Activated CD8-positive, alpha-beta T cell treated with anti-CD3 and anti-CD28 coated beads for 36 hours (primary cell): ENCODE measurements at regions of chr18 and their contacts with region 1.

Region 1: DNA sequence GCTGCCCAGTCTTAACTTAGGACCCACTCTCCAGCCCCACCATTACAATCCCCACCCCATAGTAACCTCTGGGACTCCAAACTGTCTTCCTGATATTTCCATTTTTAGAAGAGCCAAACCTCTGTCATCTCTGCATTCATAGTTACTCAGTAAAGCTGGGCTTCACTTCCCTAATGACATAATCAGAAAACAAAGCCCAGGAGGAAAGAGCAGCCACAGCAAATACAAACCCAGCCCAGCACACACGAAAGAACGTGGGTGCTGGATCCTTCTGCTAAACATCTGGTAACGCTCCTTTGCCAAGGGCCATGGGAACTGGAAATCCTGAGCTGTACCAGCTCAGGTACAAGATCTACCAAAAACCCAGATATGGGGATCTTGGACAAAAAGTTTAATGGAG is 36.8 kb upstream of the RIOK3 start:
- DNase-seq: no peak
- ATAC-seq: no peak
- H3K4me3 Mint-ChIP-seq: no peak overlapping the region
- H3K27ac Mint-ChIP-seq: no peak overlapping the region
- H3K4me1 Mint-ChIP-seq: no peaks in the 10 kb centered on the region
- H3K27me3 Mint-ChIP-seq: no peaks in the 10 kb centered on the region
- CTCF ChIP-seq: no peak

Region 2: DNA sequence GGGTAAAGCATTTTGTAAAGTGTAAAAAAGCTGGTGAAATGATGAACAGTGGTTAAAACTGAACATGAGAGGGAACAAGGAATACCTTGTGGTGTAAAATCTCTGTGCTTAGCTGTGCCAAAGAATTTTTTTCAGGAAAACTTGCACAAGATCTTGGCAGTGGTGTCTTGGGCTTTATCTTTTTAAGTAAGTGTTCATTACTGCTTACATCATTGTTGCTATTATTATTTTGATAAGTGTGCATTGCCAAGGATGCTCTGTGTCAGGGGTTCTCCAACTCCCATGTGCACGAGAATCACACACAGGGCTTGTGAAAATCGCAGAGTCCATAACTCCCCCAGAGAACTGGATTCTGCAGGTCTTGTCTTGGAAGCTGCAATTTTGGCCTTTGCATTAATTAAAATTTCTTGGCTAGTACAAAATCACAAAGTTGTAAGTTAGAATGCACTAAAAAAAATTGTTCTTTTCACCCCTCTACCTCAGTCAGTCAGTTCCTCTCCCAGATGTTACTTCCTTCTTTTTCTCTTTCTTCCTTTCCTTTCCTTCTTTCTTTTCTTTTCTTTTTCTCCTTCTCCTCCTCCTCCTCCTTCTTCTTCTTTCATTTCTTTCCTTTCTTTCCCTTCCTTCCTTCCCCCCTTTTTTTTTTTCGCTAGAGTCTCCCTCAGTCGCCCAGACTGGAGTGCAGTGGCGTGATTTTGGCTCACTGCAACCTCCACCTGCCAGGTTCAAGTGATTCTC is 1209.1 kb before region 1 on chr18:
- CTCF ChIA-PET with region 1: no interaction called
- POLR2A ChIA-PET with region 1: no interaction called
- intact Hi-C with region 1: loop called (anchors 10 kb)
- DNase-seq: no peak
- ATAC-seq: no peak
- H3K4me3 Mint-ChIP-seq: no peak overlapping the region
- H3K27ac Mint-ChIP-seq: no peak overlapping the region
- H3K4me1 Mint-ChIP-seq: no peaks in the 10 kb centered on the region
- H3K27me3 Mint-ChIP-seq: peaks cover 4% of the 10 kb centered on the region
- CTCF ChIP-seq: no peak

Region 3: GRCh38 chr18:23032030-23032582 is 384.2 kb before region 1 on chr18:
- CTCF ChIA-PET with region 1: interaction called, 6 read pairs
- POLR2A ChIA-PET with region 1: no interaction called
- intact Hi-C with region 1: loop called (anchors 10 kb)
- DNase-seq: no peak
- ATAC-seq: no peak
- H3K4me3 Mint-ChIP-seq: no peak overlapping the region
- H3K27ac Mint-ChIP-seq: no peak overlapping the region
- H3K4me1 Mint-ChIP-seq: no peaks in the 10 kb centered on the region
- H3K27me3 Mint-ChIP-seq: no peaks in the 10 kb centered on the region
- CTCF ChIP-seq: no peak

Region 4: DNA sequence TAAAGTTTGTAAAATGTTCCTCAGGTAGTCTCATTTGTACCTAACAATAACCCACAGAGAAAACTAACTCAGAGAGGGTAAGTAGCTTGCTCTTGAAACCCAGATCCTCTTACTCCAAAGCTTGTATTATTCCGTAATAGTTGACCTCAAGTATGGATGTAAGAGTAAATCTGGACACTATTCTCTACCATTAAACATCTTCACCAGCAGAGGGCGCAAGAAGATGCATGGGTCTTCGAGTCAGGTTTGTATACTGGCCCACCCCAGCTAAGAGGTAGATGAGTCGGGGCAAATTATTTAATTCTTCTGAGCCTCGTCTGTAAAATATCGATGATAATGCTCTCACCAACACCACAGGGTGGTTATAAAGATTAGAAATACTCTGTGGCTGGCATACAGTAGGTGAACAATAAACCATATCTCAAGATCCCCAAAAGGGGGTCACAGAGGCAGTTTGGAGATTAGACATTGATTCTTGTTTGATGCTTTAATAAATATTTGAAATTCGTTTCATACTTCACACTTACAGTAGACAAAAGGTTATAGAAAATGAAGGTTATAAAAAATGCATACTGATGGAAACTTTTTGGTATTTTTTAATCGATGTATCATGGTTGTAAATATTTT is 284.5 kb before region 1 on chr18:
- CTCF ChIA-PET with region 1: interaction called, 35 read pairs
- POLR2A ChIA-PET with region 1: no interaction called
- intact Hi-C with region 1: loop called (anchors 2 kb)
- DNase-seq: peak; percentile 68
- ATAC-seq: peak; percentile 63
- H3K4me3 Mint-ChIP-seq: no peak overlapping the region
- H3K27ac Mint-ChIP-seq: no peak overlapping the region
- H3K4me1 Mint-ChIP-seq: peaks cover 10% of the 10 kb centered on the region
- H3K27me3 Mint-ChIP-seq: peaks cover 27% of the 10 kb centered on the region
- CTCF ChIP-seq: peak; percentile 85

Region 5: GRCh38 chr18:23401400-23402347 is 14.6 kb before region 1 on chr18:
- CTCF ChIA-PET with region 1: interaction called, 36 read pairs
- POLR2A ChIA-PET with region 1: no interaction called
- intact Hi-C with region 1: no loop called
- DNase-seq: no peak
- ATAC-seq: no peak
- H3K4me3 Mint-ChIP-seq: no peak overlapping the region
- H3K27ac Mint-ChIP-seq: no peak overlapping the region
- H3K4me1 Mint-ChIP-seq: peaks cover 21% of the 10 kb centered on the region
- H3K27me3 Mint-ChIP-seq: no peaks in the 10 kb centered on the region
- CTCF ChIP-seq: no peak

Region 6: DNA sequence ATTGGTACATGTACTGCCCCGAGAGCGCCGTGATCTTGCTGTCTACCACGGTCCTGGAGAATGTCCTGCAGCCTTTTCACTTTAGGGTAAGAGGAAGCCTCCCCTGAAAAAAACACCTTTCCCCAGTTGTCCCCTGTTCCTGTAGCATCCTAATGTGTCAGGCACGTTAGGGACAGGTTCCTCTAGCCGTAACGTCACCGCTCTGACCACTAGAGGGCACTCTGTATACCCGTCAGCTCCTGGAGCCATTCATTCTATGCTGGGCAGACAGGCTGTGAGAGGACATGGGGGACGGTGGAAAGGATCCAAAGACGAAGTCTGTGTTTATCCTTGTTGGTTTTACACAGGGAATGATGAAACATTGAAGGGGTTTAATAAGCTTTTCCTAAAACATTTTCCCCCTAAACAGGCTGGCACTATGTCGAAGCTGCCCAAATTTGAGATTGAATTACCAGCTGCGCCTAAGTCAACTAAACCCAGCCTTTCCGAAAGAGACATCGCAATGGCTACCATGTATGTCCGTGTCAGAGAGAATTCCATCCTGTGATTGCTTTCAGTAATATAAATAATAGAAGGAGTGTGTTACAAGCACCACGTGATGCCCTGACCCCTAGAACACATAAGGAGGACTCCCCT is 99.7 kb after region 1 on chr18:
- CTCF ChIA-PET with region 1: no interaction called
- POLR2A ChIA-PET with region 1: no interaction called
- intact Hi-C with region 1: no loop called
- DNase-seq: peak; percentile 85
- ATAC-seq: peak; percentile 99
- H3K4me3 Mint-ChIP-seq: no peak overlapping the region
- H3K27ac Mint-ChIP-seq: peak overlapping the region; percentile 52
- H3K4me1 Mint-ChIP-seq: peaks cover 10% of the 10 kb centered on the region
- H3K27me3 Mint-ChIP-seq: no peaks in the 10 kb centered on the region
- CTCF ChIP-seq: peak; percentile 82